Prostate gland (tissue), 2 donors: ENCODE measurements at regions of chr15 and their contacts with region 1.

Region 1: DNA sequence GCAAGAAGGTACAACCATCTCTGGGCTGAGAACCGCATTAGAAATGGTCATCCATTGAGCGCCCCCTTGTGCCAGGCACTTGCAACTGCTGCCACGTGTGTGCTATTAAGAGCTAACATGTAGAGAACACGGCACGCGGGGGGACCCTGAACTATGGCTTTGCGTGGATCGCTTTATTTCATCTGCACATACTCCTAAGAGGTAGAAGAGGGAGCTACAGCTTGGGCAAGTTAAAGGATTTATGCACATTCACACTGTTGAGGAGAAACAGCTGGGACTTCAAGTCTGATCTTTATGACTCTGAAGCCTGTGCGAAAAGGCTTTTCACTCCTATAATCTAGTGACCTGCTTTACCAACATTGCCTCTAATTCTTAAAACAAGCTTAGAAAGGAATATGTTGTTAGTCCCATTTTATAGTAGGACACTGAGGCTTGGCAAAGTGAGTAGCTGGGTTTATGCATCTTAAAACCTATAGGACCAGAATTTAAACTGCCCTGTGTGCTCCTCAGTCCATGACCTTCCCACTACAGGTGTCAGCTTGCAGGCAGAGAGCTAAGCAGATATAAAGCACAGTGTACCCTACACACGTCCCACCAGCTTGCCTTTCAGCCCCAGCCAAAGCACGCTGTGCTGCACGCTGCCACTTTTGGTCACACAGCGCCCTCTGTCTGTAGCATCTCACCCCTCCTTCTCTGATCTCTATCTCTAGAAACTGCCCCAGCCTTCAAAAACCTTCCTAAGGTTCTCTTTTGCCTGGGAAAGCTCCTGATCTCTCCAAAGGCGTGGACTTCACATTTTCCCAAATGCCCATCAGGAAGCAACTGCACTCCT is 57.8 kb downstream of the STARD5 start:
- DNase-seq: peak; percentile 71
- H3K4me3 ChIP-seq: no peak overlapping the region
- H3K27ac ChIP-seq: no peak overlapping the region
- H3K4me1 ChIP-seq: no peaks in the 10 kb centered on the region
- H3K27me3 ChIP-seq: peaks cover 4% of the 10 kb centered on the region
- CTCF ChIP-seq: peak; percentile 64 to 85 (median 78)
- POLR2A ChIP-seq: no peak

Region 2: DNA sequence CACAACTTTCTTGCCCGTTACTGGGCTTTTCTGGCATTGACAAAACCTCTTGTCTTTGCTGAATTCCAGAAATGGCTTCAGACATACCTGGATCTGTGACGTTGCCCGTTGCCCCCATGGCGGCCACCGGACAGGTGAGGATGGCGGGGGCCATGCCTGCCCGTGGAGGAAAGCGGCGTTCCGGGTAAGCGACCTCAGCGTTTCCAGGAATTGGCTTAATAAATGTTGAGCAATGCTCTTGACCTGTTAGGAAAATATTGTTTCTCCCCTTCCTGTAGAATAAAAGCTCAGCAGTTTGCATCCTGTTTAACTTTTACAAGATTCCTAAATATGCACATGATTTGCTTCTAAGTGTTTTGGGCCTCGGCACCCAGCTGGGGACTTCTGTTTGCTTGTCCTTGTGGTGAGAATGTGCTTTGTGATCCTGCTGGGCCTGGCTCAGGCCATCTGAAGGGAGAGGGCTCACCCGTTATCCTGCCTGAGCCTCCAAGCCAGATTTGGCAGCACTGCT is 815.3 kb before region 1 on chr15:
- intact Hi-C with region 1: no loop called
- DNase-seq: no peak
- H3K4me3 ChIP-seq: no peak overlapping the region
- H3K27ac ChIP-seq: no peak overlapping the region
- H3K4me1 ChIP-seq: no peaks in the 10 kb centered on the region
- H3K27me3 ChIP-seq: no peaks in the 10 kb centered on the region
- CTCF ChIP-seq: no peak
- POLR2A ChIP-seq: no peak

Region 3: GRCh38 chr15:80977627-80978036 is 288.5 kb before region 1 on chr15:
- intact Hi-C with region 1: loop called (anchors 5 kb)
- DNase-seq: peak; percentile 54
- H3K4me3 ChIP-seq: no peak overlapping the region
- H3K27ac ChIP-seq: no peak overlapping the region
- H3K4me1 ChIP-seq: peaks cover 14% of the 10 kb centered on the region
- H3K27me3 ChIP-seq: no peaks in the 10 kb centered on the region
- CTCF ChIP-seq: peak in 3 of 4 experiments; percentile 50 to 64 (median 62)
- POLR2A ChIP-seq: no peak

Region 4: GRCh38 chr15:81038975-81039607 is 227.1 kb before region 1 on chr15:
- intact Hi-C with region 1: no loop called
- DNase-seq: peak; percentile 12
- H3K4me3 ChIP-seq: no peak overlapping the region
- H3K27ac ChIP-seq: no peak overlapping the region
- H3K4me1 ChIP-seq: no peaks in the 10 kb centered on the region
- H3K27me3 ChIP-seq: no peaks in the 10 kb centered on the region
- CTCF ChIP-seq: no peak
- POLR2A ChIP-seq: no peak

Region 5: GRCh38 chr15:81106560-81106959 is 159.6 kb before region 1 on chr15:
- intact Hi-C with region 1: loop called (anchors 2 kb)
- DNase-seq: peak; percentile 51
- H3K4me3 ChIP-seq: no peak overlapping the region
- H3K27ac ChIP-seq: no peak overlapping the region
- H3K4me1 ChIP-seq: no peaks in the 10 kb centered on the region
- H3K27me3 ChIP-seq: no peaks in the 10 kb centered on the region
- CTCF ChIP-seq: peak; percentile 42 to 81 (median 76)
- POLR2A ChIP-seq: no peak

Region 6: GRCh38 chr15:81155375-81156218 is 110.6 kb before region 1 on chr15:
- intact Hi-C with region 1: loop called (anchors 2 kb)
- DNase-seq: peak; percentile 46
- H3K4me3 ChIP-seq: no peak overlapping the region
- H3K27ac ChIP-seq: no peak overlapping the region
- H3K4me1 ChIP-seq: no peaks in the 10 kb centered on the region
- H3K27me3 ChIP-seq: no peaks in the 10 kb centered on the region
- CTCF ChIP-seq: peak in 3 of 4 experiments; percentile 30 to 52 (median 49)
- POLR2A ChIP-seq: no peak